ENCODE measurements at regions of chr6 and their contacts with region 1.

Region 1: DNA sequence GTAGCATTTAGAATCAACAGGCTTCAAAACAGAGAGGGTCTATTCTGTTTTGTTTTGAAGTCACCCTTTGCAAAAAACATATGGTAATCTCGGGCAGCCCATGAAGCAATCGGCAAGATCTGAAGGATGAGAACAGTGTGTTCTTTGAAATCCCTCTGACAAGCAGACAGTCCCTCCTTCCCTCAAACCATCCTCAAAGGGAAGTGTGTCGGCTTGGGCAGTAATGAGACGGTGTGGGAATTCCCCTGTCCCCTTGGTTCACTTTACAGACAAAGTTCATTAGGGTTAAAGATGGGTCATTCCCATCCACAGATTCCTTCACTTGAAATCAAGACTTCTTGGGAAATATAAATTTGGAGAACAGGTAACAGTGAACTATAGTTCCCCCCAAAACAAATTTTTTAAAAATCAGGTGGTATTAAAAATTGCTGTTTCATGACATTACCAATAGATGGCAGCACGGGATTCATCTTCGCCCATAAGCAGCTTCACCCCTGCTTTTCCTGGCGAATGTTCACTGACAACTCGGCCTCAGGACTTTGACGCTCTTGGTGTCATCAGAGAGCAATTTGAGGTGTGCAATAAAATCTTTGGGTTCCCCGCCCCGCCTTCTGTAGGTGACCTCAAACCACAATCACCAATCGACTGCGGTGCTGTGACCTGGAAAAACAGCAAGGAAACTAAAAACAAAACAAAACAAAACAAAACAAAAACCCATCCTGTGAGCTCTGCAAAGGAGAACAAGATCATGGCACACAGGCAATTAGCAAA is 159.3 kb upstream of the TNFAIP3 start:
- DNase-seq: no peak
- H3K4me3 ChIP-seq: peak overlapping the region; percentile 5 to 35 (median 16)
- H3K27ac ChIP-seq: peak overlapping the region in 1 of 4 donors; percentile 25
- H3K4me1 ChIP-seq: peaks cover 11 to 25% (median 14%) of the 10 kb centered on the region in 4 donors
- H3K27me3 ChIP-seq: no peaks in the 10 kb centered on the region
- CTCF ChIP-seq: peak; percentile 79 to 83 (median 82)
- EP300 ChIP-seq: peak; percentile 62
- POLR2A ChIP-seq: no peak

Region 2: DNA sequence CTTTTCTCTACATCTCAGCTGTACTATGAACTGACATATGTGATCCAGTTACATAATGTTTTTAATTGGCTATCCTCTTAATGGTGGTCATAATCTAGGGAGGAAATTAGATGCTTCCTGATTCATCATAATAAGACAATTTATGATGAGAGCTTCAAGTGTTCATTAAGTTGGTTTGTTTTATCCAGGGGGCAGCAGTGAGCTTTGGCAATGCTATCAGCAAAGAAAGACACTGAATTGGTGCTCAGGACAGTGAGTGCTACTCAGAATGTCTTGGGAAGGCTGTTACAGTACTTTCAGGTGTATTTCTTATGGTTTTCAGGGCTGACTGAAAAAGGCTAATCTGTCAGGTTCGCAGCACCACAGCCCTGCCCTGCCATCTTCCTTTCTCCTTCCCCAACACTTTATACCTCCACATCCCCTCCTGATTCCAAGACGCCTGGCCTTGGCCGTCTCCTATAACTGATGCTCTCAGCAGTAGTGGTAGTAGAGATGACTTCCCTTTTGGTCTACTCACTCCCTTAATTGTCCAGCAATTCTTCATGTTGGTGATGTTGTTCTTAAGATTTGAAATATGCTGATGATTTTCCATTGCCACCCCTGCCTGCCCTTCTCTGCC is 92.3 kb after region 1 on chr6:
- intact Hi-C with region 1: no loop called
- DNase-seq: no peak
- H3K4me3 ChIP-seq: no peak overlapping the region
- H3K27ac ChIP-seq: no peak overlapping the region
- H3K4me1 ChIP-seq: peaks cover 11 to 40% (median 35%) of the 10 kb centered on the region in 4 donors
- H3K27me3 ChIP-seq: no peaks in the 10 kb centered on the region
- CTCF ChIP-seq: peak; percentile 42 to 55 (median 44)
- EP300 ChIP-seq: no peak
- POLR2A ChIP-seq: no peak

Region 3: DNA sequence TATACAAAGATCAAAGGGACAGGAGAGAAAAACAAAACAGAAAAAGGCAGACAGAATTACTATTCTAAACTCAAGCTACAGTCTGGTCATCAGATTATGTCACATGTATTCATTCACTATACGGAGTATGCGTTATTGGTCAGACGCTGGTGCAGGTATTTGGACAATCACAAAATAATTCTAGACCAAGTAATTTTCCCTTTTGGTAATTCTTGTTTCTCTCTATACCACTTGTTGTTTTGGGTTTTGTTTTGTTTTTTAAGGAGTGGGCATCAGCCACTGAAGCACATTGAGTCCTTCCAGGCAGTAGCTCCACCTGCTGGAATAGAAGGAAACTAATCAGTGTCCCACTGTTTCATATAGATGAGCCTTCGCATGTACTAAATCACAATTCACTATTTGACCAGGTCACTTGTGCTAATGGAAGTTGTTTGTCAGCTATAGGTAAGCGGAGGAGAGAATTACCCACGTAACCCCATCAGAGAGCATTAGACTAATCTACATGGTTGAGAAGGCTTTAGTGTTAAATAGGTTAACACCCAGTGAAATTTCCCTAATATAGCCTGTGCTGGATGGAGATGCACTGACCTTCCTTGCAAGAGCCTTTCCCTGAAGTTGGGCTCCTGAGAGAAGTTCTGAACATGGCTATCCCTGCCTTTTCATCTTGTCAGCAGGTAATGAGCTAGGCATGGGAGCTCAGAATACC is 237.2 kb after region 1 on chr6:
- intact Hi-C with region 1: loop called (anchors 2 kb)
- DNase-seq: no peak
- H3K4me3 ChIP-seq: peak overlapping the region in 1 of 4 donors; percentile 23
- H3K27ac ChIP-seq: no peak overlapping the region
- H3K4me1 ChIP-seq: peaks cover 6 to 13% (median 9%) of the 10 kb centered on the region in 4 donors
- H3K27me3 ChIP-seq: no peaks in the 10 kb centered on the region
- CTCF ChIP-seq: peak; percentile 78 to 87 (median 83)
- EP300 ChIP-seq: no peak
- POLR2A ChIP-seq: no peak

Region 4: GRCh38 chr6:137975188-137975940 is 267.6 kb after region 1 on chr6:
- intact Hi-C with region 1: loop called (anchors 10 kb)
- DNase-seq: no peak
- H3K4me3 ChIP-seq: no peak overlapping the region
- H3K27ac ChIP-seq: no peak overlapping the region
- H3K4me1 ChIP-seq: peaks cover 0 to 8% (median 3%) of the 10 kb centered on the region in 4 donors
- H3K27me3 ChIP-seq: no peaks in the 10 kb centered on the region
- CTCF ChIP-seq: peak; percentile 27 to 47 (median 36)
- EP300 ChIP-seq: no peak
- POLR2A ChIP-seq: no peak

Region 5: GRCh38 chr6:138109042-138109997 is 401.5 kb after region 1 on chr6:
- intact Hi-C with region 1: loop called (anchors 10 kb)
- DNase-seq: no peak
- H3K4me3 ChIP-seq: no peak overlapping the region
- H3K27ac ChIP-seq: peak overlapping the region; percentile 50 to 97 (median 90)
- H3K4me1 ChIP-seq: peaks cover 10 to 41% (median 37%) of the 10 kb centered on the region in 4 donors
- H3K27me3 ChIP-seq: peaks cover 0 to 9% (median 0%) of the 10 kb centered on the region in 4 donors
- CTCF ChIP-seq: peak; percentile 97 to 99 (median 98)
- EP300 ChIP-seq: no peak
- POLR2A ChIP-seq: no peak